Activated CD8-positive, alpha-beta T cell treated with anti-CD3 and anti-CD28 coated beads for 36 hours (primary cell): ENCODE measurements at regions of chr20 and their contacts with region 1.

Region 1: GRCh38 chr20:16801919-16802911 is 54.1 kb downstream of the OTOR start:
- DNase-seq: peak; percentile 80
- ATAC-seq: peak; percentile 53
- H3K4me3 Mint-ChIP-seq: no peak overlapping the region
- H3K27ac Mint-ChIP-seq: no peak overlapping the region
- H3K4me1 Mint-ChIP-seq: no peaks in the 10 kb centered on the region
- H3K27me3 Mint-ChIP-seq: peaks cover 35% of the 10 kb centered on the region
- CTCF ChIP-seq: peak; percentile 77

Region 2: GRCh38 chr20:16821211-16822089 is 19.2 kb after region 1 on chr20:
- CTCF ChIA-PET with region 1: interaction called, 53 read pairs
- POLR2A ChIA-PET with region 1: interaction called, 3 read pairs
- intact Hi-C with region 1: no loop called
- DNase-seq: peak; percentile 29
- ATAC-seq: peak; percentile 55
- H3K4me3 Mint-ChIP-seq: no peak overlapping the region
- H3K27ac Mint-ChIP-seq: no peak overlapping the region
- H3K4me1 Mint-ChIP-seq: no peaks in the 10 kb centered on the region
- H3K27me3 Mint-ChIP-seq: peaks cover 25% of the 10 kb centered on the region
- CTCF ChIP-seq: peak; percentile 90

Region 3: GRCh38 chr20:16864069-16864468 is 61.9 kb after region 1 on chr20:
- CTCF ChIA-PET with region 1: no interaction called
- POLR2A ChIA-PET with region 1: no interaction called
- intact Hi-C with region 1: no loop called
- DNase-seq: no peak
- ATAC-seq: no peak
- H3K4me3 Mint-ChIP-seq: no peak overlapping the region
- H3K27ac Mint-ChIP-seq: no peak overlapping the region
- H3K4me1 Mint-ChIP-seq: no peaks in the 10 kb centered on the region
- H3K27me3 Mint-ChIP-seq: no peaks in the 10 kb centered on the region
- CTCF ChIP-seq: no peak

Region 4: DNA sequence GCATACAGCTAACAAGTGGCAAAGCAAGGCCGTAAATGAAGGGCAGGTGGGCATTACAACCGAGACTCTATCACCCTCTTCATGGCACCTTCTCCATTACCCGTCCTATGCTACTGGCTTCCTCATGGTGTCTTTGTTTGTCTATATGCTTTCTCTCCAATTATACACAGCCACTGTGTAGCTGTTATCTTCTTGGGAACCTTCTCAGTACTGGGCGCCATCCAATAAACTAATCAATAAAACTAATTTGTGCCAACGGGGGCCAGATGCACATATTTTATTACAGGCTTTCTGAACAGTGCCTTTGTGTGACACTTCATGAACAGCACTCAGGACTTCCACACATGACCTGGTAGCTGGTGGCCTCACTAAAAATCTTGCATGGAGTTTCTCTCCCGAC is 274.8 kb after region 1 on chr20:
- CTCF ChIA-PET with region 1: no interaction called
- POLR2A ChIA-PET with region 1: no interaction called
- intact Hi-C with region 1: loop called (anchors 10 kb)
- DNase-seq: no peak
- ATAC-seq: no peak
- H3K4me3 Mint-ChIP-seq: no peak overlapping the region
- H3K27ac Mint-ChIP-seq: no peak overlapping the region
- H3K4me1 Mint-ChIP-seq: no peaks in the 10 kb centered on the region
- H3K27me3 Mint-ChIP-seq: no peaks in the 10 kb centered on the region
- CTCF ChIP-seq: no peak

Region 5: GRCh38 chr20:17431621-17432364 is 629.6 kb after region 1 on chr20:
- CTCF ChIA-PET with region 1: interaction called, 71 read pairs
- POLR2A ChIA-PET with region 1: no interaction called
- intact Hi-C with region 1: loop called (anchors 2 kb)
- DNase-seq: peak; percentile 65
- ATAC-seq: no peak
- H3K4me3 Mint-ChIP-seq: no peak overlapping the region
- H3K27ac Mint-ChIP-seq: no peak overlapping the region
- H3K4me1 Mint-ChIP-seq: no peaks in the 10 kb centered on the region
- H3K27me3 Mint-ChIP-seq: peaks cover 5% of the 10 kb centered on the region
- CTCF ChIP-seq: peak; percentile 97